Endothelial cell of umbilical vein (primary cell): ENCODE measurements at regions of chr7 and their contacts with region 1.

Region 1: DNA sequence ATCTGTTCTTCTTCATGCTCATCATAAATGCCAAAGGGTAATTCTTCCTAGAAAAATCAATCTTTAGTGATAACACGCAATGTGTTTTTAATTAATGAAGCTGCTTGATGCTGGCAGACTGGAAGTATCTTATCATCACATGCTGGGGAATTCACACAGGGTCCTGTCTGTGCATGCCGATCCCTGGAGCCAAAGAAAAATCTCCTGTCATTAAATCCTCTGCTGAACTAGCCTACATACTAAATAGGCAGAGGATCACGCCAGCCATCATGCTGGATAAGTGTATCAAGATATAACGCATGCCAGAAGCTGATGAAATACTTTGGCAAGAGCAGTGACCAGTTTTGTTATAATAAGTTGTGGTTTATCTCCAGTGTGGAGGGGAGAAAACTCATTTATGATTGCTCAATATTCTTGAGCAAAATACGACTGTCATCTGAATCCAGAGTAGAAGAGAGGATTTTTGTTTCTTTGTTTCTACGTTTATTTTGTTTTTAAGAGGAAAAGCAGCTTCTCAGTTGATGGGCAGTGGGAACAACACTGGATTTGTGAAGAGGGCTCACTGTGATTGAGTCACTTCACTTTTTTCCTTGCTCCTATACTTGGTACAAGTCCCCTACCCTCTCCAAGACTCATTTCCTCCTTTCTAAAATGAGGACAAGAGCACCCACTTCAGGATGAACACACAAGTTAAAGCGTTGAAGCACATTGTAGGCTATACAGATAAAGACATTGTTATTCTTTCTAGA is 649.1 kb downstream of the TNS3 start:
- DNase-seq: peak; percentile 34
- H3K4me3 ChIP-seq: no peak overlapping the region
- H3K27ac ChIP-seq: no peak overlapping the region
- H3K4me1 ChIP-seq: peaks cover 8% of the 10 kb centered on the region
- H3K27me3 ChIP-seq: no peaks in the 10 kb centered on the region
- CTCF ChIP-seq: no peak
- POLR2A ChIP-seq: no peak

Region 2: GRCh38 chr7:46764100-46764936 is 168.5 kb before region 1 on chr7:
- CTCF ChIA-PET with region 1: no interaction called
- POLR2A ChIA-PET with region 1: no interaction called
- dilution Hi-C with region 1: no loop called
- intact Hi-C with region 1: loop called (anchors 5 kb)
- DNase-seq: peak; percentile 99
- H3K4me3 ChIP-seq: no peak overlapping the region
- H3K27ac ChIP-seq: peak overlapping the region; percentile 69
- H3K4me1 ChIP-seq: peaks cover 28% of the 10 kb centered on the region
- H3K27me3 ChIP-seq: no peaks in the 10 kb centered on the region
- CTCF ChIP-seq: no peak
- POLR2A ChIP-seq: no peak

Region 3: DNA sequence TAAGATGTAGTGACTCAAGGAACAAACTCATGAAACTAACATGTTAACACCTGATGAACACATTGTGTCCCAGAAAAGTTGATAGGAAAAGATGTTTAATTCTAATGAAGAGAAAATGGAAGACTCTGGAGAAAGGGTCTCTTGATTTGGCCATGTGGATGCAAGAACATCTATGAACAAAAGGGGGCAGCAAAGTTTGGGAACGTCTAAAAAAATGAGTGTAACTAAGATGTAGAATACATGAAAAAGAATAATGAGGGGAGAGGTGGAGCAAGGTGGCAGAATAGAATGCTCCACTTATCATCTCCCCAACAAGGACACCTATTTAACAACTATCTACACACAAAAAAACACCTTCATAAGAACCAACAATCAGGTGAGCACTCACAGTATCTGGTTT is 156.1 kb before region 1 on chr7:
- CTCF ChIA-PET with region 1: no interaction called
- POLR2A ChIA-PET with region 1: no interaction called
- dilution Hi-C with region 1: no loop called
- intact Hi-C with region 1: loop called (anchors 1 kb)
- DNase-seq: peak; percentile 51
- H3K4me3 ChIP-seq: no peak overlapping the region
- H3K27ac ChIP-seq: no peak overlapping the region
- H3K4me1 ChIP-seq: no peaks in the 10 kb centered on the region
- H3K27me3 ChIP-seq: no peaks in the 10 kb centered on the region
- CTCF ChIP-seq: peak; percentile 43
- POLR2A ChIP-seq: no peak

Region 4: GRCh38 chr7:46902463-46902862 is 30.4 kb before region 1 on chr7:
- CTCF ChIA-PET with region 1: no interaction called
- POLR2A ChIA-PET with region 1: no interaction called
- dilution Hi-C with region 1: no loop called
- intact Hi-C with region 1: no loop called
- DNase-seq: no peak
- H3K4me3 ChIP-seq: no peak overlapping the region
- H3K27ac ChIP-seq: no peak overlapping the region
- H3K4me1 ChIP-seq: no peaks in the 10 kb centered on the region
- H3K27me3 ChIP-seq: no peaks in the 10 kb centered on the region
- CTCF ChIP-seq: no peak
- POLR2A ChIP-seq: no peak

Region 5: GRCh38 chr7:46949270-46949931 is 16.6 kb after region 1 on chr7:
- CTCF ChIA-PET with region 1: no interaction called
- POLR2A ChIA-PET with region 1: no interaction called
- dilution Hi-C with region 1: no loop called
- intact Hi-C with region 1: no loop called
- DNase-seq: no peak
- H3K4me3 ChIP-seq: no peak overlapping the region
- H3K27ac ChIP-seq: no peak overlapping the region
- H3K4me1 ChIP-seq: no peaks in the 10 kb centered on the region
- H3K27me3 ChIP-seq: no peaks in the 10 kb centered on the region
- CTCF ChIP-seq: no peak
- POLR2A ChIP-seq: no peak